MCF 10A (cell line): ENCODE measurements at regions of chrX and their contacts with region 1.

Region 1: DNA sequence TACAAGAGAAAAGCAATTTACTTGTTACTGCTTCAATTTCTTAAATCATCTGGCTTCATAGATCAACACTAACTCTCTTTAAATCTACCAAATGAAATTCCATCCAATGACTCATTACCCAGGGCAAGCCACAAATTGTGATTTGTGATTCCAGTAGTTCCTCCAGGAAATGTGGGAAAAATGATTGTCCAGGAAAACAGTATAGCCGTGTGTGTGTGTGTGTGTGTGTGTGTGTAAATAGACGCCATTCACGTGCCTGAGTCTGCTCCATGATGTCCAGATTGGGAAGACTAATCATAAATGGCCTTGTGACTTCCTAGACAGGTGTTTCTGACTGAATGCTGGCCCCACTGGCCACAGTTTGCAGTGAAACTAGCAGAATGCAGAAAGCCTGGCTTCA is 121.3 kb downstream of the HS6ST2 start:
- DNase-seq: peak; percentile 63
- H3K4me3 Mint-ChIP-seq: no peak overlapping the region
- H3K27ac Mint-ChIP-seq: peak overlapping the region; percentile 3
- H3K4me1 Mint-ChIP-seq: peaks cover 5% of the 10 kb centered on the region
- H3K27me3 Mint-ChIP-seq: peaks cover 52% of the 10 kb centered on the region
- CTCF ChIP-seq: no peak

Region 2: GRCh38 chrX:132957211-132958090 is 120.3 kb after region 1 on chrX:
- CTCF ChIA-PET with region 1: no interaction called
- POLR2A ChIA-PET with region 1: no interaction called
- intact Hi-C with region 1: loop called (anchors 5 kb)
- DNase-seq: peak; percentile 23
- H3K4me3 Mint-ChIP-seq: peak overlapping the region; percentile 79
- H3K27ac Mint-ChIP-seq: no peak overlapping the region
- H3K4me1 Mint-ChIP-seq: peaks cover 3% of the 10 kb centered on the region
- H3K27me3 Mint-ChIP-seq: peaks cover 3% of the 10 kb centered on the region
- CTCF ChIP-seq: no peak